ENCODE measurements at regions of chr2 and their contacts with region 1.

Region 1: GRCh38 chr2:48356701-48357325 is 173.1 kb upstream of the STON1 start:
- DNase-seq: peak in 7 of 14 experiments; percentile 5 to 83 (median 45)
- ATAC-seq: peak; percentile 92
- H3K4me3 ChIP-seq: no peak overlapping the region
- H3K4me3 Mint-ChIP-seq: peak overlapping the region; percentile 75
- H3K27ac ChIP-seq: peak overlapping the region; percentile 70 to 71
- H3K27ac Mint-ChIP-seq: peak overlapping the region; percentile 72
- H3K4me1 ChIP-seq: peaks cover 31% of the 10 kb centered on the region
- H3K4me1 Mint-ChIP-seq: peaks cover 70% of the 10 kb centered on the region
- H3K27me3 ChIP-seq: no peaks in the 10 kb centered on the region
- H3K27me3 Mint-ChIP-seq: no peaks in the 10 kb centered on the region
- CTCF ChIP-seq: no peak

Region 2: DNA sequence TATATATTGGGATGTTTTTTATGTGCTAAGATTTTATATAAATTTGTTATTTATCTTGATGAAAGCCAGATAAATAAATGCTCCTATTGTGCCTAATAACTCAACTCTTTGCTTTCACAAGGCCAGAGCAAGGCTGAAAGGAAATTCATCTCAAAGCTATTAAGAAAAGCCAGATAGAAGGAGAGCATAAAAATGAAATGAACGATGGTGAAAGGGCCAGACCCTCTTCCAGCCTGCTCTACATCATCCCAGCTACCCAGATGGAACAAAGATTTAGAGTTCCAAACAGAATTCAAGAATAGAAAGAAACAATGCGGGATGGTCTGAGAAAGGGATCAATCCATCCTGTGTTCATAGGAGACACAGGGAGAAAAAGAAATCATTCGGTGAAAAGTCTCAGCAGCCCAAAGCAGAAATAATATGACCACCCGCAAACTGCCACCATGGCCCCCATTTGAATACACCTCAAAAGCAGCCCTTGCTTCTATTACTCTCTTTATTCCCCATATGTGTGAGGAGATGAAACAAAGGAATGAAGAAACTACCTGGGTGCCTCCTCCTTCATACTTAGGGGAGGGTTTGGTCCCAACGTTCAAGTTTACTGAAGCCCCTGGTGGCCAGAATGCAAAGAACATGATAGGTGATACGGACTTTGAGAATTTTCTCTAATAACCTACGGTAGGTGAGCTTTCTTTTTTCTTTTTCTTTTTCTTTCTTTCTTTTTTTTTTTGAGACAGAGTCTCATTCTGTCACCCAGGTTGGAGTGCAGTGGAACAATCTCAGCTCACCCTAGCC is 340.4 kb before region 1 on chr2:
- CTCF ChIA-PET with region 1: no interaction called
- POLR2A ChIA-PET with region 1: no interaction called
- intact Hi-C with region 1: no loop called
- DNase-seq: peak in 4 of 14 experiments; percentile 1 to 30 (median 15)
- ATAC-seq: no peak
- H3K4me3 ChIP-seq: no peak overlapping the region
- H3K4me3 Mint-ChIP-seq: no peak overlapping the region
- H3K27ac ChIP-seq: no peak overlapping the region
- H3K27ac Mint-ChIP-seq: no peak overlapping the region
- H3K4me1 ChIP-seq: no peaks in the 10 kb centered on the region
- H3K4me1 Mint-ChIP-seq: no peaks in the 10 kb centered on the region
- H3K27me3 ChIP-seq: peaks cover 0 to 4% of the 10 kb centered on the region in 2 experiments
- H3K27me3 Mint-ChIP-seq: peaks cover 14% of the 10 kb centered on the region
- CTCF ChIP-seq: no peak

Region 3: GRCh38 chr2:48175254-48175653 is 181.6 kb before region 1 on chr2:
- CTCF ChIA-PET with region 1: no interaction called
- POLR2A ChIA-PET with region 1: no interaction called
- intact Hi-C with region 1: no loop called
- DNase-seq: no peak
- ATAC-seq: no peak
- H3K4me3 ChIP-seq: no peak overlapping the region
- H3K4me3 Mint-ChIP-seq: no peak overlapping the region
- H3K27ac ChIP-seq: no peak overlapping the region
- H3K27ac Mint-ChIP-seq: no peak overlapping the region
- H3K4me1 ChIP-seq: no peaks in the 10 kb centered on the region
- H3K4me1 Mint-ChIP-seq: no peaks in the 10 kb centered on the region
- H3K27me3 ChIP-seq: no peaks in the 10 kb centered on the region
- H3K27me3 Mint-ChIP-seq: no peaks in the 10 kb centered on the region
- CTCF ChIP-seq: no peak

Region 4: DNA sequence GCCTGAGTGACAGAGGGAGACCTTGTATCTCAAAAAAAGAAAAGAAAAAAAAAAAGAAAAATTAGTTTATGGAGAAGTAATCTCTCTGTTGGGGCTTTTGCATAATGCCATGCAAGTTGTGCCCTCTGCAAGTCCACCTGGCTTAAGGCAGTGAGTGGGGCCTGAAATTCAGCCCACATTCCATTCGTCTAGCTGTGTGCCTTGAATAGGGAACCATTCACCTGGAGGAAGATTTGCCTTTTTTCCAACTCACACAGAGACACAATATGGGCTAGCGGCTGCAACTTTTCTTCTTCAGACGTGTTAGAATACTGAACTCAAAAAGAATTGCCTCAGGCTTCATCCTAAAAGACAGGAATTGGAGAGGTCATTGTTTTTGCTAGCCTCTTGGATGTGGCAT is 13.2 kb after region 1 on chr2:
- CTCF ChIA-PET with region 1: no interaction called
- POLR2A ChIA-PET with region 1: no interaction called
- intact Hi-C with region 1: no loop called
- DNase-seq: no peak
- ATAC-seq: no peak
- H3K4me3 ChIP-seq: no peak overlapping the region
- H3K4me3 Mint-ChIP-seq: no peak overlapping the region
- H3K27ac ChIP-seq: no peak overlapping the region
- H3K27ac Mint-ChIP-seq: peak overlapping the region; percentile 8
- H3K4me1 ChIP-seq: no peaks in the 10 kb centered on the region
- H3K4me1 Mint-ChIP-seq: peaks cover 24% of the 10 kb centered on the region
- H3K27me3 ChIP-seq: no peaks in the 10 kb centered on the region
- H3K27me3 Mint-ChIP-seq: no peaks in the 10 kb centered on the region
- CTCF ChIP-seq: no peak

Region 5: GRCh38 chr2:48420512-48421197 is 63.8 kb after region 1 on chr2:
- CTCF ChIA-PET with region 1: no interaction called
- POLR2A ChIA-PET with region 1: no interaction called
- intact Hi-C with region 1: loop called in 1 of 2 experiments (anchors 1 kb)
- DNase-seq: peak; percentile 88 to 97 (median 91)
- ATAC-seq: peak; percentile 90
- H3K4me3 ChIP-seq: no peak overlapping the region
- H3K4me3 Mint-ChIP-seq: peak overlapping the region; percentile 11
- H3K27ac ChIP-seq: no peak overlapping the region
- H3K27ac Mint-ChIP-seq: peak overlapping the region; percentile 60
- H3K4me1 ChIP-seq: peaks cover 24% of the 10 kb centered on the region
- H3K4me1 Mint-ChIP-seq: peaks cover 31% of the 10 kb centered on the region
- H3K27me3 ChIP-seq: no peaks in the 10 kb centered on the region
- H3K27me3 Mint-ChIP-seq: peaks cover 10% of the 10 kb centered on the region
- CTCF ChIP-seq: peak; percentile 96

Region 6: DNA sequence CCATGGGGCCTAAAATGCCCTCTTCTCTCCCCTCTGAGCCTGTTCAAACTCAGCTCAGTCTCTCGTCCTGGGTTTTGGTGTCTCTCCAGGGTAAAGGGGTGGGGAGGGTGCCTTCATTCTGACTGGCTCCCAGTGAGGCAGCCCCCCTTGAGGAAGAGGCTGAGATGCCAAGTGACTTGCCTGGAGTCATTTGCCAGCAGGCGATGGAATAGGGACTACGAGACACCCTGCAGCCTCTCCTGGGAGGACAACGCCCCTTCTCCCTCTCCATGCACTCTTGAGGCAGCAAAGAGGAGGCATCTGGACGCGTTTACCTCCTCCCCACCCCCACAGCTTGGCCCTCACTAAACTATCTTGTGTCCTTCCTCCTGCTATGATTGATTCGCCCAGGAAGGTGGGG is 172.4 kb after region 1 on chr2:
- CTCF ChIA-PET with region 1: no interaction called
- POLR2A ChIA-PET with region 1: no interaction called
- intact Hi-C with region 1: no loop called
- DNase-seq: no peak
- ATAC-seq: no peak
- H3K4me3 ChIP-seq: no peak overlapping the region
- H3K4me3 Mint-ChIP-seq: peak overlapping the region; percentile 45
- H3K27ac ChIP-seq: no peak overlapping the region
- H3K27ac Mint-ChIP-seq: no peak overlapping the region
- H3K4me1 ChIP-seq: peaks cover 15% of the 10 kb centered on the region
- H3K4me1 Mint-ChIP-seq: peaks cover 15% of the 10 kb centered on the region
- H3K27me3 ChIP-seq: no peaks in the 10 kb centered on the region
- H3K27me3 Mint-ChIP-seq: no peaks in the 10 kb centered on the region
- CTCF ChIP-seq: no peak

Measured in CD4-positive, alpha-beta T cell (primary cell).